CD4-positive, alpha-beta T cell (primary cell): ENCODE measurements at regions of chr12 and their contacts with region 1.

Region 1: GRCh38 chr12:104456417-104456949 is at the start of gene CHST11:
- DNase-seq: peak; percentile 53 to 89 (median 69)
- ATAC-seq: peak; percentile 60
- H3K4me3 ChIP-seq: peak within 1 kb of the TSS; percentile 100
- H3K4me3 Mint-ChIP-seq: peak within 1 kb of the TSS; percentile 99
- H3K27ac ChIP-seq: peak within 1 kb of the TSS; percentile 49 to 78
- H3K27ac Mint-ChIP-seq: peak within 1 kb of the TSS; percentile 86
- H3K4me1 ChIP-seq: peaks cover 27% of the 10 kb centered on the region
- H3K4me1 Mint-ChIP-seq: peaks cover 45% of the 10 kb centered on the region
- H3K27me3 ChIP-seq: no peaks in the 10 kb centered on the region
- H3K27me3 Mint-ChIP-seq: no peaks in the 10 kb centered on the region
- CTCF ChIP-seq: no peak
- total RNA-seq, gene CHST11: 53.4 to 53.6 TPM

Region 2: DNA sequence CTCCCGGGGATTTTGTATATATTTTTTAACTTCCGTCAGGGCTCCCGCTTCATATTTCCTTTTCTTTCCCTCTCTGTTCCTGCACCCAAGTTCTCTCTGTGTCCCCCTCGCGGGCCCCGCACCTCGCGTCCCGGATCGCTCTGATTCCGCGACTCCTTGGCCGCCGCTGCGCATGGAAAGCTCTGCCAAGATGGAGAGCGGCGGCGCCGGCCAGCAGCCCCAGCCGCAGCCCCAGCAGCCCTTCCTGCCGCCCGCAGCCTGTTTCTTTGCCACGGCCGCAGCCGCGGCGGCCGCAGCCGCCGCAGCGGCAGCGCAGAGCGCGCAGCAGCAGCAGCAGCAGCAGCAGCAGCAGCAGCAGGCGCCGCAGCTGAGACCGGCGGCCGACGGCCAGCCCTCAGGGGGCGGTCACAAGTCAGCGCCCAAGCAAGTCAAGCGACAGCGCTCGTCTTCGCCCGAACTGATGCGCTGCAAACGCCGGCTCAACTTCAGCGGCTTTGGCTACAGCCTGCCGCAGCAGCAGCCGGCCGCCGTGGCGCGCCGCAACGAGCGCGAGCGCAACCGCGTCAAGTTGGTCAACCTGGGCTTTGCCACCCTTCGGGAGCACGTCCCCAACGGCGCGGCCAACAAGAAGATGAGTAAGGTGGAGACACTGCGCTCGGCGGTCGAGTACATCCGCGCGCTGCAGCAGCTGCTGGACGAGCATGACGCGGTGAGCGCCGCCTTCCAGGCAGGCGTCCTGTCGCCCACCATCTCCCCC is 1498.2 kb before region 1 on chr12:
- CTCF ChIA-PET with region 1: no interaction called
- POLR2A ChIA-PET with region 1: no interaction called
- intact Hi-C with region 1: no loop called
- DNase-seq: no peak
- ATAC-seq: no peak
- H3K4me3 ChIP-seq: no peak overlapping the region
- H3K4me3 Mint-ChIP-seq: peak overlapping the region; percentile 34
- H3K27ac ChIP-seq: no peak overlapping the region
- H3K27ac Mint-ChIP-seq: no peak overlapping the region
- H3K4me1 ChIP-seq: peaks cover 16% of the 10 kb centered on the region
- H3K4me1 Mint-ChIP-seq: peaks cover 13% of the 10 kb centered on the region
- H3K27me3 ChIP-seq: peaks cover 59 to 94% of the 10 kb centered on the region in 2 experiments
- H3K27me3 Mint-ChIP-seq: peaks cover 92% of the 10 kb centered on the region
- CTCF ChIP-seq: no peak

Region 3: GRCh38 chr12:104314242-104314614 is 142.3 kb before region 1 on chr12:
- CTCF ChIA-PET with region 1: no interaction called
- POLR2A ChIA-PET with region 1: no interaction called
- intact Hi-C with region 1: no loop called
- DNase-seq: peak in 2 of 14 experiments; percentile 15 to 26
- ATAC-seq: no peak
- H3K4me3 ChIP-seq: no peak overlapping the region
- H3K4me3 Mint-ChIP-seq: no peak overlapping the region
- H3K27ac ChIP-seq: no peak overlapping the region
- H3K27ac Mint-ChIP-seq: no peak overlapping the region
- H3K4me1 ChIP-seq: no peaks in the 10 kb centered on the region
- H3K4me1 Mint-ChIP-seq: peaks cover 5% of the 10 kb centered on the region
- H3K27me3 ChIP-seq: no peaks in the 10 kb centered on the region
- H3K27me3 Mint-ChIP-seq: no peaks in the 10 kb centered on the region
- CTCF ChIP-seq: no peak

Region 4: DNA sequence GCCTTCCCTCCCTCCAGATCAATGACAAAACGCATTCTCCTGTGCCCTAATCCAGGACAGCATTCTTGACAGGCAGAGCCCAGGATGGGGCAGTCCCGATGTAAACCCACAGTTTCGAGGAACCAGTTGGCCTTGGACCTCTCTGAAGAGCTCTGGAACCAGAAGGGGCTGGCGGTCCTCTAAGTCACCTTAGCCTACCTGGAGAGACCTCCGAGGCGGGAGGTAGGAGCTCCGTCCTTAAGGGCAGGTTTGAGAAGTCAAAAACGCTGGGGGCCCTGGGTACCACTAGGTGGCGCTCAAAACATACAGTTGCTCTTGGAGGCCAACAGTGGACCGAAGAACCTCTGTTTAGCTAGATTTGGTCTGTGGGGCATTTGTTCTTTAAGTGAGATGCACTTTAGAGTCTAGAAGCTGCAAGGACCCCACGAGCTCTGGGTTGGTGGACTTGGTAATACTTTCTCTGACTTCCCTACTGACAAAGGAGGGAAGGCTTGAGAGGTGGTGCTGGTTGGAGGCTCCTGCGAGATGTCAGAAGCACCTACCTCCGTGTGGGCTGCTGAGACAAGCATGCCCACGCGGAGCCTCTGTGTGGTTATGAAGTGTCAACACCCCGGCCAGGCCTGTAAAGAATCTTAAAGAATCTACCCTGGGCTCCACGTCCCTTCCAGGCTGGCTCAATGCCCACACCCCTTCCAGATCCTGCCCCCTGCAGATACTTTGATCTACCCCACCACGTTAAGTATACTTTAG is 74.6 kb before region 1 on chr12:
- CTCF ChIA-PET with region 1: interaction called, 15 read pairs
- POLR2A ChIA-PET with region 1: no interaction called
- intact Hi-C with region 1: loop called in 1 of 2 experiments (anchors 2 kb)
- DNase-seq: peak; percentile 67 to 89 (median 78)
- ATAC-seq: peak; percentile 89
- H3K4me3 ChIP-seq: no peak overlapping the region
- H3K4me3 Mint-ChIP-seq: no peak overlapping the region
- H3K27ac ChIP-seq: no peak overlapping the region
- H3K27ac Mint-ChIP-seq: no peak overlapping the region
- H3K4me1 ChIP-seq: peaks cover 9% of the 10 kb centered on the region
- H3K4me1 Mint-ChIP-seq: peaks cover 10% of the 10 kb centered on the region
- H3K27me3 ChIP-seq: no peaks in the 10 kb centered on the region
- H3K27me3 Mint-ChIP-seq: peaks cover 6% of the 10 kb centered on the region
- CTCF ChIP-seq: peak; percentile 91

Region 5: DNA sequence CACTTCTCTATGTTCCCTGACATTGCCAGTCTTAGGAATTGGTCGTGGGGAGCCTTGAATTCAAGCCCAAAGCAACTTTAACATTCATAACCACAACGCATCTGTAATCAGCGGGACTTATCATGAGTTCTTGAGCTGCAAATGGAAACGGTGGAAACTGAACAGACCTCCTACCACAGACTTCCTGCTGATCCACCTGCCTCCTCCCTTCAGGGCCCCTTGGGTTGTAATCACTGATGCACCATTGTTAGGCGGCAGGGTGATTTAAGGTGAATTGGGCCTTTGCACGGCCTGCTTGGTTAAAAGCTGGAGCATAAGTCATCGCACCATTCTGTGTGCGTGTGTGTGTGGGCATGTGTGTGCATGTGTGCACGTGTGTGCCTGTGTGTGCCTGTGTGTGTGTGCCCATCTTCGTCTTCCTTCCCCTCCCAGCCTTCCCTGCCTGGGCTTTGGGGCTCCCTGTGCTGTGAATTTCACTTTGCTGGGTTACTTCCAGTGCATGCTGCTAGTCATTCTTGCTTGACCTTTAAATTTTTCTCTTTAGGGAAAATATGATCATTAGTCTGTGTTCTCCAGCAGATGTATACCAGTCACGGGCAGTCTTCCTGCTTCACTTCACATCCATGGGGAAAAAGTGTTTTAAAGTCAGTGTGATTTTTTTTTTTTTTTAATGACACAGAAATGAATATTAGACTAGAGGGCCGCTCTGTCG is 29.3 kb after region 1 on chr12:
- CTCF ChIA-PET with region 1: interaction called, 4 read pairs
- POLR2A ChIA-PET with region 1: interaction called, 35 read pairs
- intact Hi-C with region 1: loop called in 1 of 2 experiments (anchors 2 kb)
- DNase-seq: peak in 13 of 14 experiments; percentile 36 to 78 (median 51)
- ATAC-seq: peak; percentile 95
- H3K4me3 ChIP-seq: no peak overlapping the region
- H3K4me3 Mint-ChIP-seq: peak overlapping the region; percentile 69
- H3K27ac ChIP-seq: peak overlapping the region; percentile 3 to 33
- H3K27ac Mint-ChIP-seq: peak overlapping the region; percentile 76
- H3K4me1 ChIP-seq: peaks cover 73% of the 10 kb centered on the region
- H3K4me1 Mint-ChIP-seq: peaks cover 92% of the 10 kb centered on the region
- H3K27me3 ChIP-seq: no peaks in the 10 kb centered on the region
- H3K27me3 Mint-ChIP-seq: no peaks in the 10 kb centered on the region
- CTCF ChIP-seq: no peak

Region 6: DNA sequence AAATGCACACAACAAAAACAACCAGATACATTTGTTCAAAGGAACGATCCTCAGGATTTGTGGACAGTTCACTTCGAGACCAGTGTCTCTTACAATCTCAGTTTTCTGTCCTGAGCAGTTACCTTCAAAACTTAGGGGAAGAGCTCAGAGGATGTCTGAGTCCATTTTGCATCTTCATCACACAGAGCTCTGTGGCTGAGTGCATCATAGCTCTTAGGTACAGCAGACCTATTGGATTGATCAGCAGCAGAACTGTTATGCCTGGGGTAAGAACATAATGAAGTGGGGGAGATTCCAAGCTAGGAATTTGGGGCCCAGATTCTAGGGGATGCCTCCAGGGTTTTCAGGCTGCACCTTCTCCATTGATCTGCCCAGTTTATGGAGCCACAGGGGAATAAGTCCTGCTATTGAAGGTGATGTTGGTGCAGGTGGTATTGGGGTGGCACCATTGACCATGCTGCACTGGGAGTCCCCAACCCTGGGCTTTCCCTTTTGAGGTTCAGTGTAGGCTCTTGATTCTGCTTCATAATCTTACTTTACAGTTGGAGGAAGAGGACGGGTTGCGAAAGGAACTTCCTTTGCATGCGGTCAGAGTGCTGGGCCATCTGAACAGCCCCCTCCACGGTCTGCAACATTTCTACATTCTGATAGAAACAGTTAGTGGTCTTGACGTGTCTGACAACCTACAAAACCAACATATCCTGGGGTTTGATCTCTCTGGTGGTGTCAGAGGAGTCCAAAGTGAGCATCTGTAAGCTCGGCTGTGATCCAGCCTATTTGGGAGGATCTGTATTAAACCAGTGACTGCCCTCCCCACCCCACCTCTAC is 113.1 kb after region 1 on chr12:
- CTCF ChIA-PET with region 1: no interaction called
- POLR2A ChIA-PET with region 1: interaction called, 8 read pairs
- intact Hi-C with region 1: loop called in 1 of 2 experiments (anchors 2 kb)
- DNase-seq: peak in 10 of 14 experiments; percentile 11 to 82 (median 28)
- ATAC-seq: peak; percentile 75
- H3K4me3 ChIP-seq: peak overlapping the region; percentile 6
- H3K4me3 Mint-ChIP-seq: peak overlapping the region; percentile 2
- H3K27ac ChIP-seq: peak overlapping the region; percentile 13 to 59
- H3K27ac Mint-ChIP-seq: peak overlapping the region; percentile 71
- H3K4me1 ChIP-seq: peaks cover 33% of the 10 kb centered on the region
- H3K4me1 Mint-ChIP-seq: peaks cover 61% of the 10 kb centered on the region
- H3K27me3 ChIP-seq: no peaks in the 10 kb centered on the region
- H3K27me3 Mint-ChIP-seq: no peaks in the 10 kb centered on the region
- CTCF ChIP-seq: no peak

Region 7: GRCh38 chr12:104710940-104711689 is 254.6 kb after region 1 on chr12:
- CTCF ChIA-PET with region 1: no interaction called
- POLR2A ChIA-PET with region 1: no interaction called
- intact Hi-C with region 1: loop called in 1 of 2 experiments (anchors 5 kb)
- DNase-seq: no peak
- ATAC-seq: no peak
- H3K4me3 ChIP-seq: no peak overlapping the region
- H3K4me3 Mint-ChIP-seq: no peak overlapping the region
- H3K27ac ChIP-seq: no peak overlapping the region
- H3K27ac Mint-ChIP-seq: peak overlapping the region; percentile 55
- H3K4me1 ChIP-seq: peaks cover 15% of the 10 kb centered on the region
- H3K4me1 Mint-ChIP-seq: peaks cover 42% of the 10 kb centered on the region
- H3K27me3 ChIP-seq: no peaks in the 10 kb centered on the region
- H3K27me3 Mint-ChIP-seq: no peaks in the 10 kb centered on the region
- CTCF ChIP-seq: no peak

Region 8: GRCh38 chr12:104958009-104958945 is 501.8 kb after region 1 on chr12 and contains the start of gene SLC41A2:
- CTCF ChIA-PET with region 1: interaction called, 6 read pairs
- POLR2A ChIA-PET with region 1: interaction called, 3 read pairs
- intact Hi-C with region 1: loop called in 1 of 2 experiments (anchors 10 kb)
- DNase-seq: peak; percentile 53 to 93 (median 72)
- ATAC-seq: peak; percentile 95
- H3K4me3 ChIP-seq: peak within 1 kb of the TSS; percentile 63
- H3K4me3 Mint-ChIP-seq: peak within 1 kb of the TSS; percentile 99
- H3K27ac ChIP-seq: no peak within 1 kb of the TSS
- H3K27ac Mint-ChIP-seq: peak within 1 kb of the TSS; percentile 93
- H3K4me1 ChIP-seq: peaks cover 15% of the 10 kb centered on the region
- H3K4me1 Mint-ChIP-seq: peaks cover 26% of the 10 kb centered on the region
- H3K27me3 ChIP-seq: no peaks in the 10 kb centered on the region
- H3K27me3 Mint-ChIP-seq: peaks cover 7% of the 10 kb centered on the region
- CTCF ChIP-seq: peak; percentile 19
- total RNA-seq, gene SLC41A2: 1.2 to 1.7 TPM